ENCODE measurements at regions of chr22 and their contacts with region 1.

Region 1: DNA sequence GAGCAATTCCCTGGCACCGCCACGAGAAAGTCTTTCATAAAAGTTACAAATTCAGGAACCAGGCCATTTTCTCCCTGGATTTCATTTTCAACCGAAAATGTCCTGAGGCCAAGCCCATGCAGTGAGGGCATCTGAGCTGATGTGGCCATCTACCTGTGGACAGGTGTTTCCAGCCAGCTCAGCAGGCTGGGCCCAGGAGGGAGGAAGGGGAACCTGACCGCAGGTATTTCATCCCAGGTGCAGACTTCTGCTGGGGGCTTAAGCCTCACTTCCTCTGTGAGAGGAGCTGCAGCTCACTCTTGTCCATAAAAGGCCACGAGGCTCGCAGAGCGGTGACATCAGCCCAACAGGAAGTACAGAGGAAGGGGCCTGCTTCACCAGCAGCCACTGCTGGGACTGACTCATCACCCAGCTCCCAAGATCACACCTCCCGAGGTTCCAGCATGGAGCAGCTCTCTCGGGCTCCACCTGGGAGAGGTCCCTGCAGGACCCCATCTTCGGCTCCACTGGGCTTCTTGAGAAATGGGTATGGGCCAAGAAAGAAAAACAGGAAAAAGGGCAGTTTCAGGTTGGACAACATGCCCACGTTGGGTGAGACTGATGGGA is 56.4 kb downstream of the MYH9 start:
- DNase-seq: peak in 4 of 5 donors; percentile 54 to 66 (median 58)
- H3K4me3 ChIP-seq: no peak overlapping the region
- H3K27ac ChIP-seq: peak overlapping the region; percentile 1 to 75
- H3K4me1 ChIP-seq: peaks cover 53% of the 10 kb centered on the region
- H3K27me3 ChIP-seq: no peaks in the 10 kb centered on the region
- CTCF ChIP-seq: no peak
- EP300 ChIP-seq: no peak
- POLR2A ChIP-seq: no peak

Region 2: DNA sequence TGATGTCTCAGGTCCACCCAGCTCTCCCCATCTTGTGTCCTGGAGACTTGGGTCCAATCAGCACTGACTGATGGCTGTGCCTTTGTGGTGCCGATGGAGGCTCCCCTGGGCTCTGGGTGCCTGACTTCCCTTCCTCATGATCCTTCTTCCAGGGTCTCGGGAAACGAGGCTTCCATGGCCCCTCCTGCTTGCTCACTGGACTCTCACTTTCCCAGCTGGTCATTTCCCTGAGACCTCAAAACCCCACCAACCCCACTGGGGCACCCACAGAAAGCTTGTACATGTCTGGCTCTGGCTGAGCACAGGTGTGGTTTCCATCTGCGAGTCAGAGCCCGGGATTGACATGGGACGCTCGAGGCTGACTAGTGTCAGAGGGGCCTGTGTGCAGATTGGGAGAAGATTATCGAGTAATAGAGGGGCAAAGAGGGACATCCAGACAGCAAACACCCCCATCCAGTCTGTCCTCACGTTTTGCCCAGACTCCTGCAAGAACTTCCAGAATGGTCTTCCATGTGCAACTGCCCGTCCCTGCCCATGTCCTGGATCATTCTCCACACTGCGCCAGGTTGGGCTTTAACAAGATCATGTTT is 63.4 kb before region 1 on chr22:
- intact Hi-C with region 1: no loop called
- DNase-seq: no peak
- H3K4me3 ChIP-seq: no peak overlapping the region
- H3K27ac ChIP-seq: no peak overlapping the region
- H3K4me1 ChIP-seq: peaks cover 3% of the 10 kb centered on the region
- H3K27me3 ChIP-seq: no peaks in the 10 kb centered on the region
- CTCF ChIP-seq: no peak
- EP300 ChIP-seq: no peak
- POLR2A ChIP-seq: no peak

Region 3: GRCh38 chr22:36301384-36301828 is 30.0 kb before region 1 on chr22:
- intact Hi-C with region 1: loop called in 1 of 4 experiments (anchors 2 kb)
- DNase-seq: peak; percentile 67 to 88 (median 83)
- H3K4me3 ChIP-seq: no peak overlapping the region
- H3K27ac ChIP-seq: no peak overlapping the region
- H3K4me1 ChIP-seq: no peaks in the 10 kb centered on the region
- H3K27me3 ChIP-seq: no peaks in the 10 kb centered on the region
- CTCF ChIP-seq: peak; percentile 92 to 95 (median 94)
- EP300 ChIP-seq: no peak
- POLR2A ChIP-seq: no peak

Region 4: DNA sequence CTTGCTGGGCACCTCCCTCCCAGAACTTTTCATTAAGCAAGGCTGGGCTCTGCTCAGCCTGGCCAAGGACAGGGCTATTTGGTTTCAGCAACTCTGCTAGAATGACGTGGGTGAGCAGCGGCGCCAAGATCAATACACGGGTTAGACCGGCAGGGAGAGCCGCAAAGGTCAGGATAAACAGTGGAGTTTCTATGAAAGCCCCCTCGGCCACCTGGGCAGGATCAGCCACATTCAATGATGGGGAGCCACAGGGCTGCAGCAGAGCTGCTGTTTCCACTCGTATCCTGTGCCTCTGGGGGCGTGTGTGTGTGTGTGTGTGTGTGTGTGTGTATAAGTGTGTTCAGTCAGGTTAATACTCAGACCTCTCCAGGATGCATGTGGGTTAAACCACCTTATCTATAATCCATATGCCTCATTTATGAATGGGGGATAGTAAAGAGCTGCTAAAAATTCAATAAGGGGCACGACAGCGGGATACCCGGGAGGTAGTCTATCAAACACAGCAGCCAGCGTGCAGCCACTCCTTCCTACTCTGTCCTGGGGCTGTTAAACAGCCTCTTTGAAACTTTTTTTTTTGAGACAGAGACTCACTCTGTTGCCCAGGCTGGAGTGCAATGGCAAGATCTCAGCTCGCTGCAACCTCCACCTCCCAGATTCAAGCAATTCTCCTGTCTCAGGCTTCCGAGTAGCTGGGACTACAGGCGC is 21.5 kb after region 1 on chr22:
- intact Hi-C with region 1: loop called in 1 of 4 experiments (anchors 2 kb)
- DNase-seq: peak; percentile 65 to 87 (median 83)
- H3K4me3 ChIP-seq: no peak overlapping the region
- H3K27ac ChIP-seq: peak overlapping the region; percentile 43 to 76
- H3K4me1 ChIP-seq: peaks cover 44% of the 10 kb centered on the region
- H3K27me3 ChIP-seq: no peaks in the 10 kb centered on the region
- CTCF ChIP-seq: no peak
- EP300 ChIP-seq: no peak
- POLR2A ChIP-seq: no peak

Region 5: GRCh38 chr22:36365020-36365411 is 33.6 kb after region 1 on chr22:
- intact Hi-C with region 1: loop called in 1 of 4 experiments (anchors 5 kb)
- DNase-seq: peak in 1 of 5 donors; percentile 68
- H3K4me3 ChIP-seq: no peak overlapping the region
- H3K27ac ChIP-seq: peak overlapping the region in 1 of 2 donors; percentile 41
- H3K4me1 ChIP-seq: peaks cover 55% of the 10 kb centered on the region
- H3K27me3 ChIP-seq: no peaks in the 10 kb centered on the region
- CTCF ChIP-seq: no peak
- EP300 ChIP-seq: peak; percentile 51
- POLR2A ChIP-seq: no peak

Region 6: DNA sequence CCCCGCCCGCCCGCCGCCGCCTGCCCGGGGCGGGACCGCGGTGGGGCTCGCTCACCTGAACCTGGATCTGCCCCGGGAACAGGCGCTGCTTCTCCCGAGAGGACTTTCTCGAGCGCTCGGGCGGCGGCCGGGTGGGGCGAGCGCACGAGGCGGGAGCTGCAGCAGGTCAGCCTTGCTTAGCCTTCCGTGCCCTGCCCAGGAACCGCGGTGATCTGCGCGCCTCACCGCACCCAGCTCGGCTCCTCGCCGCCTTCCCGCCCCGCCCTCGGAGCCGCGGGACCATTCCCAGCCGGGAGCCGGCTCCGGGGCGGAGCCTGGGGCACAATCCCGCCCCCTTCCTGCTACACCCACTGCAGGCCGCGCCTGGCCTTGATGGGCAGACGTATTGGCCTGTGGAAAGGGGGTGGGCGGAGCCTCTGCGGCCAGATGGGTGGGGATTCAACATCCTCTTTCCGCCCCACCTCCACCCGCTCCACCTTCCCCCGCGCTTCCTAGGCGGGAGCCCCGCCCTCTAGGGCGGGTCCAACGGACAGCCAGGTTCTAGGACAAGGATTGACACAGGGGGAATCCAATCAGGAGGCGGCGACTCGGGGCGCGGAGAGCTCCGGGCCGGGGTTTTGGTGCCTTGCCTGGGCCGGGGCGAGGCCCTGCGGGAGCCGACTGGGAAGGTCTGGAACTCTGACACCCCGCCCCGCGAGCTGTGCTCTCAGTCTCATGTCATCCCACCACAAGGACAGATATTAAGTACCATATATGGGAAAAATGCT is 56.5 kb after region 1 on chr22 and contains the start of gene MYH9:
- intact Hi-C with region 1: loop called in 1 of 4 experiments (anchors 10 kb)
- DNase-seq: peak; percentile 100
- H3K4me3 ChIP-seq: peak within 1 kb of the TSS; percentile 68
- H3K27ac ChIP-seq: peak within 1 kb of the TSS; percentile 66 to 74
- H3K4me1 ChIP-seq: peaks cover 5% of the 10 kb centered on the region
- H3K27me3 ChIP-seq: no peaks in the 10 kb centered on the region
- CTCF ChIP-seq: no peak
- EP300 ChIP-seq: no peak
- POLR2A ChIP-seq: peak; percentile 91
- total RNA-seq, gene MYH9: 128 to 452 (median 348) TPM

Region 7: DNA sequence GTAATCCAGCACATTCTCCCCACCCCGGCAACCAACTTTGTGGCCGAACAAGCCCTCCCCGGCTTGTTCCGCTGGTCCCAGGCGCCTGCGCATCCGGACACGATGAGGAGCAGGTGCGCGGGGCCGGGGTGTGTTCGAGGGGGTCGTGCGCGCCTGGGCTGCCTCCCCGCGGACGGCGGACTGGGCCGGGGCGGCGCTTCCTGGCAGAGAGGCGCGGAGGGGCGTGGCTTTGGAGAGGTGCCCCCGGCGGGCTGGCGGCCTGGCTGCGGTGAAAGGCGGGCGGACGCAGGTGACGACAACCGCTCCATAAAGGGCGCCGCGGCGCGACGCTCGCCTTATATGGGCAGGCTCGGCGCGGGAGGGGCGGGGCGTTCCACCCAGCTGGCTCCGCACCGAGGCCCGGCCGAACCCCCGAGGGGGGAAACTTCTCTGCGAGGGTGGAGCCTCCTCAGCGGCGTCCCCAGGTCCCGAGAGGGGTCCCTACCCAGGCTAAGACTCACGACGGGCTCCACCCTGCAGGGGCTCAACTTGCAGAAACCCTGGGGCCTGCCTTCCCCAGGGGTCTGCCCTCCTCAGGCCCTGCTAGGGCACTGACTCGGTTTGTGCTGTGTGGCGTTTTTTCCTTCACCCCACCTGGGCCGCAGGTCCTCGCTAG is 123.6 kb after region 1 on chr22:
- intact Hi-C with region 1: loop called in 1 of 4 experiments (anchors 5 kb)
- DNase-seq: peak; percentile 90 to 95 (median 95)
- H3K4me3 ChIP-seq: peak overlapping the region; percentile 58
- H3K27ac ChIP-seq: peak overlapping the region; percentile 85 to 86
- H3K4me1 ChIP-seq: peaks cover 8% of the 10 kb centered on the region
- H3K27me3 ChIP-seq: no peaks in the 10 kb centered on the region
- CTCF ChIP-seq: peak in 2 of 3 donors; percentile 15 to 21
- EP300 ChIP-seq: peak; percentile 51
- POLR2A ChIP-seq: peak; percentile 65

Measured in ovary (tissue), 10 donors.